ENCODE measurements at regions of chr1 and their contacts with region 1.

Region 1: GRCh38 chr1:21368515-21369289 is 71.2 kb upstream of the NBPF3 start:
- DNase-seq: peak; percentile 80 to 83
- ATAC-seq: peak; percentile 90 to 97 (median 94)
- H3K4me3 ChIP-seq: peak overlapping the region in 1 of 10 donors; percentile 7
- H3K27ac ChIP-seq: no peak overlapping the region
- H3K4me1 ChIP-seq: peaks cover 0 to 12% (median 3%) of the 10 kb centered on the region in 9 donors
- H3K27me3 ChIP-seq: no peaks in the 10 kb centered on the region
- CTCF ChIP-seq: peak; percentile 94 to 100 (median 99)

Region 2: GRCh38 chr1:21232044-21232443 is 136.7 kb before region 1 on chr1:
- intact Hi-C with region 1: loop called (anchors 1 to 5 kb)
- DNase-seq: peak in 1 of 2 donors; percentile 58
- ATAC-seq: peak; percentile 51 to 75 (median 67)
- H3K4me3 ChIP-seq: no peak overlapping the region
- H3K27ac ChIP-seq: no peak overlapping the region
- H3K4me1 ChIP-seq: peaks cover 0 to 16% (median 3%) of the 10 kb centered on the region in 9 donors
- H3K27me3 ChIP-seq: no peaks in the 10 kb centered on the region
- CTCF ChIP-seq: peak; percentile 72 to 87 (median 77)

Region 3: DNA sequence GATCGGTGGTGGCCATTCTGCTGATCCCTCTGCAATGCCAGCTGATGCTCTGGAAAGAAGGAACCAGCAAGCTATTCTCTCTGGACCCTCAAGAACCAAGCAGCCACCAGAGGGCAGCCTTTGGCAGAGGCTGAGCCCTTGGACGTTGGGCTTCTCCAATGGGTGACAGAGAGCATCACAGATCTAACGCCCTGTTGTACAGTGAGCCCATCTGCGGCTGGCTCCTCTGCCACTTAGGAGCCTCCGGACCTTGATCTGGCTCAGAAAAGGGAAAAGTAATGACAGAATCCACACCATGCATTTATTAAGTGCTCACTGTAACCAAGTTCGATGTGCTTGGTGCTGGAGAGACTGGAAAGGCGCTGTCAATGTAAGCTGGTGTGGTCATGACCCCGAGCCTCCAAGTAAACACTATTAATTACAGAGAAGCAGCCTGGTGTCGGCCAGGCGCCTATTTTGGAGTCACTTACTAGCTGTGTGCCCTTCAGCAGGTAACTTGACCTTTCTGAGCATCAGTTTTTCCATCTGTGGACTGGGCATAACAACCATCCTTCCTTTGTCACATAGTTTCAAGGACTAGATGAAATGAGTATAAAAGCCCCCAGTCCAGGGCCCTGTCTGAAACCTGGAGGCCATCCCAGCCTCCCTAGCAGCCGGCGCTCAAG is 113.3 kb before region 1 on chr1:
- intact Hi-C with region 1: loop called (anchors 1 to 5 kb)
- DNase-seq: peak; percentile 88 to 89
- ATAC-seq: peak; percentile 78 to 90 (median 89)
- H3K4me3 ChIP-seq: no peak overlapping the region
- H3K27ac ChIP-seq: peak overlapping the region in 7 of 10 donors; percentile 9 to 66 (median 50)
- H3K4me1 ChIP-seq: peaks cover 6 to 43% (median 26%) of the 10 kb centered on the region in 9 donors
- H3K27me3 ChIP-seq: no peaks in the 10 kb centered on the region
- CTCF ChIP-seq: peak; percentile 70 to 95 (median 89)

Region 4: GRCh38 chr1:21586846-21587601 is 218.3 kb after region 1 on chr1:
- intact Hi-C with region 1: loop called in 2 of 10 experiments (anchors 5 to 10 kb)
- DNase-seq: peak; percentile 52 to 60
- ATAC-seq: peak; percentile 69 to 86 (median 82)
- H3K4me3 ChIP-seq: no peak overlapping the region
- H3K27ac ChIP-seq: peak overlapping the region in 2 of 10 donors; percentile 16
- H3K4me1 ChIP-seq: peaks cover 0 to 48% (median 32%) of the 10 kb centered on the region in 9 donors
- H3K27me3 ChIP-seq: peaks cover 0 to 39% (median 24%) of the 10 kb centered on the region in 7 donors
- CTCF ChIP-seq: no peak

Region 5: DNA sequence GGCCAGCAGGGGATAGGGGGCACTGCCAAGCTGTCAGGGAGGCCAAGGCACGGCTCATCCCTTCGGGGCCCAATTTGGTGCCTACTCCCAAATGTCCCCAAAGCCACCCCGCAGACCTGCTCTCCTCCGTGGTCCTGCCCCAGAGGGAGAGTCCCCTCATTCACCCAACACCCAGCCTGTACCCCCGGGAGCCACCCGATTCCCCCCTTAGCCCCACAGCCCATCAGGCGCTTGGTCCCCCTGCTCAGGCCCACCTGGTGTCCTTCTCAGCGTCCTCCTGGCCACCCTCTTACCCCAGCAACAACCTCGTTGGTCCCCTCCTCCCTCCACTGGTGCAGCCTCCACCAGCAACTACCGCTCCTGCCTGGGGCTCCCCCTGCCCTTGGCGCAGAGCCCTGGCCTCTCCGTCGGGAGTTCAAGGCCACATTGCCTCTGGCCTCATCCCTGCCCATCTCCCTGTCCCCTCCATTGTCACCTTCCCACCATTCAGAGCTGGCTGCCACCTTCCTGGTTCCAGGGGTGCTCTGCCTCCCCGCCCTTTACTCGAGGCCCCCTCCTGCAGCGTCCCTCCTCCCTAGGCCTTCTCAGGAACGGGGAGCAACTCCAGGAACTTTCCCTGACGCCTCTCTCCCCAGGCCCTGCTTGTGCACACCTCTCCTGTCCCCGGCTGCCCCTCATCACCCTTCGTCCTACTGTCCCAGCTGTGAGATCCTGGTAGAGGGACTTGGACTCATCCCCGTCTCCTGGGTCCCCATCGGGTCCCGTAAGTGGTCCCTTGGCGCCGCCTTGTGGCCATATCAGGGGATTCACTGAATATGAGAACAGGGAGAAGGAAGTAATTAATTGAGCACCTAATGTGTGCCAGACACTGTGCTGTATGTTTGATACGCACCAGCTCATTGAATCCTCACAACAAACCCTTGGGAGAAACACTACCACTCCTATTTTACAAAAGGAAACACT is 226.5 kb after region 1 on chr1:
- intact Hi-C with region 1: loop called in 4 of 10 experiments (anchors 1 to 10 kb)
- DNase-seq: peak; percentile 53 to 66
- ATAC-seq: peak in 4 of 8 donors; percentile 45 to 68 (median 52)
- H3K4me3 ChIP-seq: no peak overlapping the region
- H3K27ac ChIP-seq: no peak overlapping the region
- H3K4me1 ChIP-seq: peaks cover 0 to 8% (median 0%) of the 10 kb centered on the region in 9 donors
- H3K27me3 ChIP-seq: peaks cover 0 to 31% (median 11%) of the 10 kb centered on the region in 7 donors
- CTCF ChIP-seq: peak; percentile 40 to 75 (median 61)

Region 6: DNA sequence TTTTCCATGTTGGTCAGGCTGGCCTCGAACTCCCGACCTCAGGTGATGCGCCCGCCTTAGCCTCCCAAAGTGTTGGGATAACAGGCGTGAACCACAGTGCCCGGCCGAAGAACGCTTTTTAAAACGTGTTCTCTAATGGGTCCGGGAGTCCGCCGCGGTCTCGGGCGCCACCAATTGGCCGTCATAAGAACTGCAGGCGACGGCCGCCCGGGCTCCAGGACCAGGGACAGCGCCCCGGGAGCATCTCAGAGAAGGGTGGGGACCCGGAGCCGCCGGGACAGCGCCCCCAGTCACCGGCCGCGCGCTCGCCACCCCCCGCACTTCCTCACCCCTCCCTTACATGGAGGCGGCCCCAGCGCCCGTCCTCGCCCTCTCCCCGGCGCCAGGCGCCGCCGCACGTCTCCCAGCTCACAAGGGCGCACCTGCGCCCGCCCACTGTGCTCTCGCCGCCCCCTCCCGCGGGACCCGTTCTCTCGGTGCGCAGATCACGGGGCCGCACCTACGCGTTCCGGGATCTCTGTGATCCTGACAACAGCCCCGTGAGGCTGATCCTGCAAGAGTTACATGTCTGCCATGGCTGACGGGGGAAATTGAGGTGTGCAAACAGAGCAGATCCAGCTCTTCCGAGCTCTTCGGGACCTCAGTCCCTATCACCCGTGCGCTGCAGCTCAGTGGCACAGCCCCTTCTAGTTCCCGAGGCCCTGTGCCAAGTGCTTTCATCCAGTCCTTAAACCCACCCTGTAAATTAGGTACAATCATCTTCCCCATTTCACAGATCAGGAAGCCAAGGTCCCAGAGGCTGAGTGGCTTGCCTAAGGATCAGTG is 290.6 kb after region 1 on chr1:
- intact Hi-C with region 1: loop called (anchors 1 to 10 kb)
- DNase-seq: peak; percentile 67 to 75
- ATAC-seq: peak; percentile 77 to 90 (median 82)
- H3K4me3 ChIP-seq: peak overlapping the region in 3 of 10 donors; percentile 8 to 35 (median 31)
- H3K27ac ChIP-seq: no peak overlapping the region
- H3K4me1 ChIP-seq: peaks cover 0 to 20% (median 5%) of the 10 kb centered on the region in 9 donors
- H3K27me3 ChIP-seq: peaks cover 0 to 20% (median 0%) of the 10 kb centered on the region in 7 donors
- CTCF ChIP-seq: peak; percentile 93 to 98 (median 95)

Measured in heart right ventricle (tissue), 16 donors.